Activated B cell treated with CpG ODN at 0.5 μM for 24 hours (primary cell): ENCODE measurements at regions of chr22 and their contacts with region 1.

Region 1: GRCh38 chr22:22687638-22688500 is 43.5 kb downstream of the GGTLC2 start:
- DNase-seq: no peak
- ATAC-seq: no peak
- H3K4me3 Mint-ChIP-seq: peak overlapping the region; percentile 30
- H3K27ac Mint-ChIP-seq: no peak overlapping the region
- H3K4me1 Mint-ChIP-seq: peaks cover 55% of the 10 kb centered on the region
- H3K27me3 Mint-ChIP-seq: no peaks in the 10 kb centered on the region
- CTCF ChIP-seq: peak; percentile 22

Region 2: GRCh38 chr22:22463855-22464540 is 223.9 kb before region 1 on chr22:
- CTCF ChIA-PET with region 1: interaction called, 4 read pairs
- POLR2A ChIA-PET with region 1: no interaction called
- intact Hi-C with region 1: loop called (anchors 10 kb)
- DNase-seq: no peak
- ATAC-seq: peak; percentile 61
- H3K4me3 Mint-ChIP-seq: peak overlapping the region; percentile 24
- H3K27ac Mint-ChIP-seq: peak overlapping the region; percentile 61
- H3K4me1 Mint-ChIP-seq: peaks cover 19% of the 10 kb centered on the region
- H3K27me3 Mint-ChIP-seq: peaks cover 4% of the 10 kb centered on the region
- CTCF ChIP-seq: peak; percentile 76

Region 3: DNA sequence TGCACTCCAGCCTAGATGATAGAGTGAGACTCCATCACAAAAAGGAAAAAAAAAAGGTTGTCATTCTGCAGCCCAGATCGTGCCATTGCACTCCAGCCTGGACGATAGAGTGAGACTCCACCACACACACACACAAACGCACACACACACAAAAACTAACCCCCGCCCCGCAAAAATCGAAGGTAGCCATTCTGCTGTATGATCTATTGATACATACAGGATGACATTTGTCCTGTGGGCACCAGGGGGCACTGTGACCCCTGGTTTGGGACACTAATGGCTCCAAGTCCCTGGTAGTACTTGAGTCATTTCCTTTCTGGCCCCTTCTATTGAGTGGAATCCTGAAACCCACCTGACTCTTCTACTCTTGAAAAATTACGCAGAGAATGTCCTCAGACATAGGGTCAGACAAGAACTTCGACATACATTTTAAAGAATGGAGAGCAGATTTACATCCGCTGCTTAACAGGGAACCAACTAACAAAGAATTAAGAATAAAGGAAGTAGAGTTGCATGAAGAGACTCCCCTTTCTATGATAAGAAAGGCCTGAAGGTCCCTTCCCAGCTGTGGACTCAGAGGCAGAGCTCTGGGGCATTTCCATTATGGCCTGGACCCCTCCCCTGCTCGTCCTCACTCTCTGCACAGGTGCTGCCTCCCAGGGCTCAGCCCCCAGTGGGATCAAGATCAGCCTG is 93.8 kb before region 1 on chr22:
- CTCF ChIA-PET with region 1: interaction called, 4 read pairs
- POLR2A ChIA-PET with region 1: no interaction called
- intact Hi-C with region 1: loop called (anchors 2 kb)
- DNase-seq: peak; percentile 53
- ATAC-seq: peak; percentile 90
- H3K4me3 Mint-ChIP-seq: no peak overlapping the region
- H3K27ac Mint-ChIP-seq: peak overlapping the region; percentile 46
- H3K4me1 Mint-ChIP-seq: peaks cover 27% of the 10 kb centered on the region
- H3K27me3 Mint-ChIP-seq: no peaks in the 10 kb centered on the region
- CTCF ChIP-seq: no peak

Region 4: GRCh38 chr22:22702237-22703202 is 14.7 kb after region 1 on chr22:
- CTCF ChIA-PET with region 1: interaction called, 13 read pairs
- POLR2A ChIA-PET with region 1: no interaction called
- intact Hi-C with region 1: no loop called
- DNase-seq: no peak
- ATAC-seq: peak; percentile 49
- H3K4me3 Mint-ChIP-seq: no peak overlapping the region
- H3K27ac Mint-ChIP-seq: no peak overlapping the region
- H3K4me1 Mint-ChIP-seq: peaks cover 17% of the 10 kb centered on the region
- H3K27me3 Mint-ChIP-seq: no peaks in the 10 kb centered on the region
- CTCF ChIP-seq: no peak

Region 5: GRCh38 chr22:22748297-22748743 is 60.5 kb after region 1 on chr22:
- CTCF ChIA-PET with region 1: interaction called, 10 read pairs
- POLR2A ChIA-PET with region 1: no interaction called
- intact Hi-C with region 1: loop called (anchors 1 kb)
- DNase-seq: no peak
- ATAC-seq: peak; percentile 35
- H3K4me3 Mint-ChIP-seq: no peak overlapping the region
- H3K27ac Mint-ChIP-seq: peak overlapping the region; percentile 18
- H3K4me1 Mint-ChIP-seq: peaks cover 48% of the 10 kb centered on the region
- H3K27me3 Mint-ChIP-seq: no peaks in the 10 kb centered on the region
- CTCF ChIP-seq: peak; percentile 24